ENCODE measurements at regions of chr1 and their contacts with region 1.

Region 1: DNA sequence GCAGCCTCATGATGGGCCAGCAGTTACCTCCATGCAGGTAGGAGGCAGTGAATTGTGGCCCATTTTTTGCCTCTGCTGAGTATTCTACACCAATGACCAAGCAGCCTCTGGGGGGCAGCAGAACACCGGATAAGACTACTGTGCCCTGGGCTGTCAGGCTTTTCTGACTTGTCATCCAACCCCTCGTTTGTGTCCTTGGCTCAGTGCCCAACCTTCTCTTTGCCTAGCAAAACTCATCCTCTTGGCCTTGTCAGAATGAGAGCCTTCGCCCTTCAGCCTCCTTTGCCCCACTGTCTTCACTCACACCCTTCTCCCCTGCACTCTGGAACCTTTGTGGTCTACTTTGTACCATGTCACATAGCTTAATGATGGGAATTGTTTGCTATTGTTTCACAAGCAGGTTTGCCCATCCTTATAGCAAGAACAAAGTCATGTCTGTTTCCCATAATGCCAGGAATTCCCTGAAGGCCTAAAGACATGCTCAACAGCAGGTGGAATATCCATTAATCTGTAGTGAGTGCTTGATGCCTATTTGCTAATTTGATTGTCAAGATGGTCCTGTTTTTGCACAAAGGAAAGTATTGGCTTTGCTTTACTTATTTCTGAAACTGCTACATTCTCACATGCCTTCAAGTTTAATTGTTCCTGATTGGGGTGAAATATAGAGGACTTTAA is 255.9 kb downstream of the HHAT start:
- DNase-seq: peak; percentile 37 to 72 (median 63)
- ATAC-seq: no peak
- H3K4me3 ChIP-seq: no peak overlapping the region
- H3K4me3 Mint-ChIP-seq: no peak overlapping the region
- H3K27ac ChIP-seq: no peak overlapping the region
- H3K27ac Mint-ChIP-seq: no peak overlapping the region
- H3K4me1 ChIP-seq: peaks cover 4% of the 10 kb centered on the region
- H3K4me1 Mint-ChIP-seq: peaks cover 15% of the 10 kb centered on the region
- H3K27me3 ChIP-seq: no peaks in the 10 kb centered on the region
- H3K27me3 Mint-ChIP-seq: no peaks in the 10 kb centered on the region
- CTCF ChIP-seq: peak; percentile 41

Region 2: GRCh38 chr1:210553741-210554140 is 30.8 kb before region 1 on chr1:
- CTCF ChIA-PET with region 1: no interaction called
- POLR2A ChIA-PET with region 1: no interaction called
- intact Hi-C with region 1: no loop called
- DNase-seq: no peak
- ATAC-seq: no peak
- H3K4me3 ChIP-seq: no peak overlapping the region
- H3K4me3 Mint-ChIP-seq: no peak overlapping the region
- H3K27ac ChIP-seq: no peak overlapping the region
- H3K27ac Mint-ChIP-seq: no peak overlapping the region
- H3K4me1 ChIP-seq: no peaks in the 10 kb centered on the region
- H3K4me1 Mint-ChIP-seq: no peaks in the 10 kb centered on the region
- H3K27me3 ChIP-seq: no peaks in the 10 kb centered on the region
- H3K27me3 Mint-ChIP-seq: no peaks in the 10 kb centered on the region
- CTCF ChIP-seq: no peak

Region 3: DNA sequence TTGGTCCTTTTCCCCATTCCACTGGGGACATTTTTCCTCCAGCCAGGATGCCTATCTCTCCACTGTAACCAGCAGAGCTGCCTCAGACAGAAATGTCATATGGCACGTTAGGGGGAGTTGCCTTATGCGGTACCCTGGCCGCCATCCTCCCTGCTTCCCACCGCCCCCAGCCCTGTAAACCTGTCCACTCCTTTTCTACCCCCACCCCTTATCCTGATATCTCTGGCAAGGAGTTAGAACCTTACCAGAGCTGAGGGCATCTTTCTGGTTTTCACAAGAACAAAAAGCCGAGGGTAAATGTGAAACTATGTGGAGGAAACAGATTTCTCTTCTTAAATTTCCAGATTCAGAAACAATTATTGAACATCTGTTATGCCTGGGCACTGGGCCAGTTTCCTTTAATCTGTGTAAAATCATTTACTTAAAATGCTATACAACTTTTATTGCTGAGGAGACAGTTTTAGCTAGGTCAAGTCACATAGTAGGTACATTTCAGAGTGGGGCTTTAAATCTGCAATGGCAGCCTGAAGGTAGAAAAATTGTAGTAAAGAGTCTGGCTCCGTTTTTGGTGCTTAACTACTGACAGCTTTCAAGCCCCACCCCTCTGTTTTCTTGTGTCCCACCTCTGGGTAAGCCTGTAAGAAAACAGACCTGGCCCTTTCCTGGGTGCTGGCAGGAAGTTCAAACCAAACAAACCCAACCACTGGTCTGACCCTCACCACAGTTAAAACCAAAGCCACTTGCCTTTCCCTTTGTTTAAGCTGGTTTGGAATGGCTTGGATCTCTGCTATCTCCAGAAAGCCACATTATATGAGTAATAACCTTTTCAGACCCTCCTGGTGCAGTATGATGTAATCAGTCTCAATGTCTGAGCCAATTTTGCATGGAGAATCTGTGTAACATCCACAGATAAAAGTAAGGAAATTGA is 63.1 kb after region 1 on chr1:
- CTCF ChIA-PET with region 1: no interaction called
- POLR2A ChIA-PET with region 1: no interaction called
- intact Hi-C with region 1: no loop called
- DNase-seq: no peak
- ATAC-seq: no peak
- H3K4me3 ChIP-seq: no peak overlapping the region
- H3K4me3 Mint-ChIP-seq: no peak overlapping the region
- H3K27ac ChIP-seq: no peak overlapping the region
- H3K27ac Mint-ChIP-seq: no peak overlapping the region
- H3K4me1 ChIP-seq: peaks cover 6% of the 10 kb centered on the region
- H3K4me1 Mint-ChIP-seq: peaks cover 16% of the 10 kb centered on the region
- H3K27me3 ChIP-seq: no peaks in the 10 kb centered on the region
- H3K27me3 Mint-ChIP-seq: no peaks in the 10 kb centered on the region
- CTCF ChIP-seq: no peak

Region 4: DNA sequence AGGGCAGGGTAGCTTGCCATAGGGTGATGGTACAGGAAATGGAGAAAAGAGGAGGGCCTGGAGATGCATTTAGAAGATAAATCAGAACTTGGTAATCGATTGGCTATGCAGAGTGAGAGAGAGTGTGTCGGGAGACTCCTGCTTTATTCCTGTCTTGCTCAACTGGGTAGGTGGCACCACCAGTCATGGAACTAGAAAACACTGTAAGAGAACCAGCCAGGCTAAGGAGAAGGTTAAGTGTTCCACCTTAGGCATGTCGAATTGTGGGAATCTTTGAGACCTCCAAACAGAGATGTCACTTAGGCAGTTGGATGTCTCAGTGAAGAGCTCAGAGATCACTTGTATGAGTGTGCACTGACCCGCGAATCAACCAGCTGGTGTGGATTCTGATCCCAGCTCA is 936.1 kb after region 1 on chr1:
- CTCF ChIA-PET with region 1: no interaction called
- POLR2A ChIA-PET with region 1: no interaction called
- intact Hi-C with region 1: loop called (anchors 2 to 5 kb)
- DNase-seq: no peak
- ATAC-seq: no peak
- H3K4me3 ChIP-seq: no peak overlapping the region
- H3K4me3 Mint-ChIP-seq: no peak overlapping the region
- H3K27ac ChIP-seq: no peak overlapping the region
- H3K27ac Mint-ChIP-seq: no peak overlapping the region
- H3K4me1 ChIP-seq: peaks cover 5% of the 10 kb centered on the region
- H3K4me1 Mint-ChIP-seq: peaks cover 4% of the 10 kb centered on the region
- H3K27me3 ChIP-seq: no peaks in the 10 kb centered on the region
- H3K27me3 Mint-ChIP-seq: peaks cover 3% of the 10 kb centered on the region
- CTCF ChIP-seq: no peak

Measured in CD8-positive, alpha-beta T cell (primary cell).